ENCODE measurements at regions of chr22 and their contacts with region 1.

Region 1: GRCh38 chr22:23849009-23850006 is 8.4 kb upstream of the SLC2A11 start:
- DNase-seq: peak; percentile 97
- H3K4me3 Mint-ChIP-seq: peak overlapping the region; percentile 37
- H3K27ac Mint-ChIP-seq: no peak overlapping the region
- H3K4me1 Mint-ChIP-seq: peaks cover 3% of the 10 kb centered on the region
- H3K27me3 Mint-ChIP-seq: peaks cover 6% of the 10 kb centered on the region

Region 2: DNA sequence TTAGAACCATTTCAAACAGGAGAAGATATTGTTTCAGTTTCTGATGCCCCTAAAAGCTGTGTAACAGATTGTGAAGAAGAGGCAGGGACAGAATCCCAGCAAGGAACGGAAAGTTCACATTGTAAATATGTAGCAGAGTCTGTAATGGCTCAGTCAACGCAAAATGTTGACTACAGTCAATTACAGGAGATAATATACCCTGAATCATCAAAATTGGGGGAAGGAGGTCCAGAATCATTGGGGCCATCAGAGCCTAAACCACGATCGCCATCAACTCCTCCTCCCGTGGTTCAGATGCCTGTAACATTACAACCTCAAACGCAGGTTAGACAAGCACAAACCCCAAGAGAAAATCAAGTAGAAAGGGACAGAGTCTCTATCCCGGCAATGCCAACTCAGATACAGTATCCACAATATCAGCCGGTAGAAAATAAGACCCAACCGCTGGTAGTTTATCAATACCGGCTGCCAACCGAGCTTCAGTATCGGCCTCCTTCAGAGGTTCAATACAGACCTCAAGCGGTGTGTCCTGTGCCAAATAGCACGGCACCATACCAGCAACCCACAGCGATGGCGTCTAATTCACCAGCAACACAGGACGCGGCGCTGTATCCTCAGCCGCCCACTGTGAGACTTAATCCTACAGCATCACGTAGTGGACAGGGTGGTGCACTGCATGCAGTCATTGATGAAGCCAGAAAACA is 310.0 kb before region 1 on chr22:
- intact Hi-C with region 1: loop called (anchors 10 kb)
- DNase-seq: peak; percentile 92
- H3K4me3 Mint-ChIP-seq: peak overlapping the region; percentile 55
- H3K27ac Mint-ChIP-seq: no peak overlapping the region
- H3K4me1 Mint-ChIP-seq: peaks cover 8% of the 10 kb centered on the region
- H3K27me3 Mint-ChIP-seq: peaks cover 13% of the 10 kb centered on the region

Region 3: DNA sequence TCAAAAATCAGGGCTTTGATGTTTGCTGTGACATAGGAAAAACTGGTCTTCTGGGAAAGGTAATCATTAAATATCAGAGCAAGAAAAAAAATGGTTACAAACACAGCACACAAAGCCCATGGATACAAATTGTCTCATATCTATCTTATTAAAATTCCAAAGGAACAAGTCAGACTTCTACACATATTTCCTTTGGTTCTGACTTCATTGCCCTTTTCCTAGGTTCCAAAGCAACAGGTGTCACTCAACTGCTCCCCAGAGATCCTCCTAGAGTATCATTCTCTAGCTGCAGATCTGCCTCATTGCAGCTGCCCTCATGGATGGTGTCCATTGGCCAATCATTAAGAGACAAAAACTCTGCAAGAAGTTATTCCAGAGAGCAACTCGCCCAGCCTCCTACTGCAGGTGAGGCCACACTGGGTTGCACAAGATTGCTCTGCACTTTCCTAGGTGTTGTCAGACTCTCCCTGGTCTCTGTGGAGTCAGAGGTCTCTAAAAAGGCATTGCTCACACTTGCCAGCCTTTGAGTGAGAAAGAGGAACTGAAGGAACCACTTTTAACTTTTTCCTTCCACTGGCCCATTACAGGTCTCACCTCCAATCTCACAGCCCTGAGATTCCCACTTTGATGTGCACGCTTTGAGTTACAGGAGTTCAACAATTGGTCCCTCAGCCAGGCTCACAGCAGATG is 222.9 kb before region 1 on chr22:
- intact Hi-C with region 1: loop called (anchors 5 kb)
- DNase-seq: no peak
- H3K4me3 Mint-ChIP-seq: no peak overlapping the region
- H3K27ac Mint-ChIP-seq: no peak overlapping the region
- H3K4me1 Mint-ChIP-seq: peaks cover 3% of the 10 kb centered on the region
- H3K27me3 Mint-ChIP-seq: no peaks in the 10 kb centered on the region

Region 4: GRCh38 chr22:23922651-23923320 is 73.5 kb after region 1 on chr22:
- intact Hi-C with region 1: no loop called
- DNase-seq: no peak
- H3K4me3 Mint-ChIP-seq: no peak overlapping the region
- H3K27ac Mint-ChIP-seq: no peak overlapping the region
- H3K4me1 Mint-ChIP-seq: no peaks in the 10 kb centered on the region
- H3K27me3 Mint-ChIP-seq: no peaks in the 10 kb centered on the region

Measured in activated CD4-positive, alpha-beta T cell treated with anti-CD3 and anti-CD28 coated beads, Interleukin-2, amount 10 ng/mL, durations not matched to agents 24 days and 14 days (primary cell).